ENCODE measurements at regions of chr16 and their contacts with region 1.

Region 1: GRCh38 chr16:14300705-14301168 is 229.6 kb downstream of the MRTFB start:
- DNase-seq: peak; percentile 73 to 85 (median 77)
- H3K4me3 ChIP-seq: peak overlapping the region; percentile 75
- H3K27ac ChIP-seq: peak overlapping the region in 1 of 2 donors; percentile 1
- H3K4me1 ChIP-seq: peaks cover 3% of the 10 kb centered on the region
- H3K27me3 ChIP-seq: no peaks in the 10 kb centered on the region
- CTCF ChIP-seq: peak; percentile 31 to 69 (median 68)
- EP300 ChIP-seq: no peak
- POLR2A ChIP-seq: no peak

Region 2: GRCh38 chr16:13606804-13607203 is 693.9 kb before region 1 on chr16:
- intact Hi-C with region 1: no loop called
- DNase-seq: no peak
- H3K4me3 ChIP-seq: no peak overlapping the region
- H3K27ac ChIP-seq: no peak overlapping the region
- H3K4me1 ChIP-seq: no peaks in the 10 kb centered on the region
- H3K27me3 ChIP-seq: no peaks in the 10 kb centered on the region
- CTCF ChIP-seq: no peak
- EP300 ChIP-seq: no peak
- POLR2A ChIP-seq: no peak

Region 3: DNA sequence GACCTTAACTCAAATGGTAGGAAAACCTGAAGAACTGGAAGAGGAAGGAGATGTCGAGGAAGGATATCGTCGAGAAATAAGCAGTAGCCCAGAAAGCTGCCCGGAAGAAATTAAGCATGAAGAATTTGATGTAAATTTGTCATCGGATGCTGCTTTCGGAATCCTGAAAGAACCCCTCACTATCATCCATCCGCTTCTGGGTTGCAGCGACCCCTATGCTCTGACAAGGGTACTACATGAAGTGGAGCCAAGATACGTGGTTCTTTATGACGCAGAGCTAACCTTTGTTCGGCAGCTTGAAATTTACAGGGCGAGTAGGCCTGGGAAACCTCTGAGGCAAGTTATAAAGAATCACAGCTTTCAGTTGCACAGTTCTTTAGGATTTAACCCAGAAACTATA is 365.3 kb before region 1 on chr16:
- intact Hi-C with region 1: no loop called
- DNase-seq: no peak
- H3K4me3 ChIP-seq: no peak overlapping the region
- H3K27ac ChIP-seq: no peak overlapping the region
- H3K4me1 ChIP-seq: peaks cover 2% of the 10 kb centered on the region
- H3K27me3 ChIP-seq: no peaks in the 10 kb centered on the region
- CTCF ChIP-seq: no peak
- EP300 ChIP-seq: no peak
- POLR2A ChIP-seq: no peak

Region 4: GRCh38 chr16:14632692-14633569 is 332.2 kb after region 1 on chr16 and contains the start of gene BFAR:
- intact Hi-C with region 1: loop called in 1 of 4 experiments (anchors 10 kb)
- DNase-seq: peak; percentile 99 to 100 (median 99)
- H3K4me3 ChIP-seq: peak within 1 kb of the TSS; percentile 60
- H3K27ac ChIP-seq: peak within 1 kb of the TSS; percentile 70 to 78
- H3K4me1 ChIP-seq: peaks cover 8% of the 10 kb centered on the region
- H3K27me3 ChIP-seq: no peaks in the 10 kb centered on the region
- CTCF ChIP-seq: no peak
- EP300 ChIP-seq: peak; percentile 28
- POLR2A ChIP-seq: peak; percentile 95
- total RNA-seq, gene BFAR: 42.2 to 57.0 (median 47.0) TPM

Measured in ovary (tissue), 10 donors.